Stomach (tissue), 19 donors: ENCODE measurements at regions of chr6 and their contacts with region 1.

Region 1: DNA sequence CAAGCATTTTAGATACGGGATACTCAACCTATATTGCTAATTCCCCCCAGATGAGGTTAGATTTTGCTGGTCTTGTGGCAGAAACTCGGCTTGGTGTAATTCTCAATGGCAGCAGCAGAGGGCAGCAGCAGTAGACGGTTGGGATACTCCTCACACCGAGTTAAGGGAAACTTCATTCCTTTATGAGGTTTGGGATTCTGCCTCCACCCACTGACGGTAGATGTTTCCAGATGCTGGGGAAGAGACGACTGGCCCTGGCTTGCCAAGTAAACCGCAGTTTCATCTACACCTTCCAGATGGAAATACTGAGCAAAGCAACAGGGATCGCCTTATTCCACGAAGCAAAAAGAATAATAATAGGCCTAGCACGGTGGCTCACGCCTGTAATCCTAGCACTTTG is 8.2 kb upstream of the TBC1D7 start:
- DNase-seq: peak; percentile 69 to 91
- H3K4me3 ChIP-seq: no peak overlapping the region
- H3K27ac ChIP-seq: peak overlapping the region in 1 of 5 donors; percentile 18
- H3K4me1 ChIP-seq: peaks cover 0 to 8% (median 0%) of the 10 kb centered on the region in 4 donors
- H3K27me3 ChIP-seq: no peaks in the 10 kb centered on the region
- CTCF ChIP-seq: peak in 6 of 7 experiments; percentile 45 to 97 (median 95)
- EP300 ChIP-seq: no peak
- POLR2A ChIP-seq: no peak

Region 2: DNA sequence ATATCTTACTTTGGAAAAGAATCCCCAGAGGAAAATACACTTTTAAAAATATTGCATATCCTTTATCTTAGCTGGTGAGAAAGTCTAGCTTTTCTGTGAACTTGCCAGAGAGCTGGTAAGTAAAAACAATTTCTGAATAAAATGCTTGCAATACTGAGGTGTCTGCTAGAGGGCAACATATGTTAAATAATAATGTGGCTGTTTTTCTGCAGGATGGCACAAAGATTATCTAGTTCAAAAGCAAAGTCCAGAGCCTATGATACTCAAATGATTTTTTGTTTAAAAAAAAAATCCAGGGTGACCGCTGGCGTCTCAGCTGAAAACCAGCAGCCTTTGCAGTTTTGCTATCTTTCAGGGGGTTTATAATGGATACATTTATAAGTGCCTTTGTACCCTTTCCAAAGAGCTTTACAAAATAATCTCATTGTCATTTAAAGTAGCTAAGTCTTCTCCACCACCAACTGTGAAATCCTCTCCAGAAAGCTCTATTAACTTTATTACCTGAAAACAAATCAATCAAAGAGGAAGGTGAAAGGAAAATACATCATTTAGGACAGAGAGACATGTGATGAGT is 425.1 kb before region 1 on chr6:
- intact Hi-C with region 1: loop called (anchors 10 kb)
- DNase-seq: peak in 1 of 2 donors; percentile 71
- H3K4me3 ChIP-seq: no peak overlapping the region
- H3K27ac ChIP-seq: no peak overlapping the region
- H3K4me1 ChIP-seq: peaks cover 0 to 5% (median 0%) of the 10 kb centered on the region in 4 donors
- H3K27me3 ChIP-seq: no peaks in the 10 kb centered on the region
- CTCF ChIP-seq: peak in 5 of 7 experiments; percentile 25 to 54 (median 41)
- EP300 ChIP-seq: no peak
- POLR2A ChIP-seq: no peak

Region 3: DNA sequence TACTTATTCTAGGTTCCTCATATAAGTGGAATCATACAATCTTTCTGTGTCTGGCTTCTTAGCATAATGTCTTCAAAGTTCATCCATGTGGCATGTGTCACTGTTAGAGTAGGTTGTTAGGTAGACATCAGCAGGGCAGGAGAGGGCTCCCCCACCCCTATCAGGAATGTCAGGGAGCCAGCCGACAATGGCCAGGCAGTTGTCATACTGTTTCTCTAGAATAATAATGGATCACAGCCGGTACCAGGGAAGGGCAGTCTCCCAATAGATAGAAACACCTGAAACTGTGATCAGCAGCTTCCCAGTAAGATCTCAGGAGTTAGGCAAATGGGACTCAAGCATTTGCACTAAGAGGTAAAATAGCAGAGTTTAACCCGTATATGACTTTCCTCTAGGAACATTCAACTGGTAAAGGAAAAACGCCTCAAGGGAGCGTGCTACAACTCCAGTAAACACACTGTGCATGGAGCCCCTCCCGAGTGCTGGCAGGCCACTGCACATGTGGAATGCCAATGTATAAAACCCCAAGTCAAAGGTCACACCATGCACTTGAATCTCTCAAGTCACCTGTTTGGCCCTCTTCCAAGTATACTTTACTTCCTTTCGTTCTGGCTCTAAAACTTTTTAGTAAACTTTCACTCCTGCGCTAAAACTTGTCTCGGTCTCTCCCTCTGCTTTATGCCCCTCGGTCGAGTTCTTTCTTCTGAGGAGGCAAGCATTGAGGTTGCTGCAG is 208.1 kb after region 1 on chr6:
- intact Hi-C with region 1: loop called (anchors 5 kb)
- DNase-seq: no peak
- H3K4me3 ChIP-seq: no peak overlapping the region
- H3K27ac ChIP-seq: no peak overlapping the region
- H3K4me1 ChIP-seq: no peaks in the 10 kb centered on the region
- H3K27me3 ChIP-seq: no peaks in the 10 kb centered on the region
- CTCF ChIP-seq: no peak
- EP300 ChIP-seq: no peak
- POLR2A ChIP-seq: no peak